ENCODE measurements at regions of chr7 and their contacts with region 1.

Region 1: GRCh38 chr7:134646425-134647305 is at the start of gene BPGM:
- DNase-seq: peak; percentile 96
- H3K4me3 Mint-ChIP-seq: no peak within 1 kb of the TSS
- H3K27ac Mint-ChIP-seq: no peak within 1 kb of the TSS
- H3K4me1 Mint-ChIP-seq: peaks cover 37% of the 10 kb centered on the region
- H3K27me3 Mint-ChIP-seq: no peaks in the 10 kb centered on the region
- total RNA-seq, gene BPGM: 23.8 and 25.3 TPM in 2 replicates

Region 2: DNA sequence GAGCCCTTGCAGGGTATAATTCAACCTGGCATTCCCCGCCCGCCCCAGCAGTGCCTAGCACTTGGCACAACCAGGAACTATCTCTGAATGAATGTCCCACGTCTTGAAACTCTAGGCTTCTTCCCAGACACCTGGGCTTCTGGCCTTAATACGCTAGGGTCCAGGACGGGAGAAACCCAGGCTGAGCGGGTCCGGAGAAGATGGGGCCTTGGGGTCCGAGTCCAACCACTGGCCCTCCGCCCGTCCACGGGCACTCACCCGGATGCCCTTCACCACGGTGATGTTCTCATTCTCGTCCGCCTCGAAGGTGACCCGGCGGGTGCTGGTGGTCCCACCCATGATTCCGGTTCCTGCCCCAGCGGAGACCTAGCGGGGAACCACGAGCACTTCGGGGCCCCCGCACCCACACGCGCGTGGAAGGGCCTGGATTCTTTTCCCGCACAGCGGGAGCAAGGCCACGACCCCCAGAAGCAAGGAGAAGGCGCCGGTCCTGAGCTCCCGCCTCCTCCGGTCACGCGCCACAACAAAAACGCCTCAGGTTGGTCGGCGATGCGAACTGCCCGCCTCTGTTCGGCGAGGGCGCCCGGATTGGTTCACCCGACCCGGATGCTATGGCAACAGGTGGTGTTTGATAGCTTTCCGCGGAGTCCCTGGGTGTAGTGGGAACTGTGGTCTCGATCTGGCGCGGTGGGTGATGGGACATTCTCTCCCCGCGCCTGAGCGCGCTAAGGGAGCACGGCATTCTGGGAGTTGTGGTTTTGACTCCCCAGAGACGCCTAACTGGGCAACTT is 1564.9 kb before region 1 on chr7 and contains the start of gene CHCHD3:
- intact Hi-C with region 1: loop called (anchors 5 kb)
- DNase-seq: peak; percentile 95
- H3K4me3 Mint-ChIP-seq: peak within 1 kb of the TSS; percentile 93
- H3K27ac Mint-ChIP-seq: peak within 1 kb of the TSS; percentile 94
- H3K4me1 Mint-ChIP-seq: peaks cover 33% of the 10 kb centered on the region
- H3K27me3 Mint-ChIP-seq: no peaks in the 10 kb centered on the region
- total RNA-seq, gene CHCHD3: 69.9 and 76.8 TPM in 2 replicates

Region 3: GRCh38 chr7:134316539-134317344 is 329.9 kb before region 1 on chr7 and contains the start of gene SLC35B4:
- intact Hi-C with region 1: loop called (anchors 1 kb)
- DNase-seq: peak; percentile 91
- H3K4me3 Mint-ChIP-seq: peak within 1 kb of the TSS; percentile 93
- H3K27ac Mint-ChIP-seq: peak within 1 kb of the TSS; percentile 89
- H3K4me1 Mint-ChIP-seq: peaks cover 17% of the 10 kb centered on the region
- H3K27me3 Mint-ChIP-seq: no peaks in the 10 kb centered on the region
- total RNA-seq, gene SLC35B4: 22.4 and 23.3 TPM in 2 replicates

Region 4: DNA sequence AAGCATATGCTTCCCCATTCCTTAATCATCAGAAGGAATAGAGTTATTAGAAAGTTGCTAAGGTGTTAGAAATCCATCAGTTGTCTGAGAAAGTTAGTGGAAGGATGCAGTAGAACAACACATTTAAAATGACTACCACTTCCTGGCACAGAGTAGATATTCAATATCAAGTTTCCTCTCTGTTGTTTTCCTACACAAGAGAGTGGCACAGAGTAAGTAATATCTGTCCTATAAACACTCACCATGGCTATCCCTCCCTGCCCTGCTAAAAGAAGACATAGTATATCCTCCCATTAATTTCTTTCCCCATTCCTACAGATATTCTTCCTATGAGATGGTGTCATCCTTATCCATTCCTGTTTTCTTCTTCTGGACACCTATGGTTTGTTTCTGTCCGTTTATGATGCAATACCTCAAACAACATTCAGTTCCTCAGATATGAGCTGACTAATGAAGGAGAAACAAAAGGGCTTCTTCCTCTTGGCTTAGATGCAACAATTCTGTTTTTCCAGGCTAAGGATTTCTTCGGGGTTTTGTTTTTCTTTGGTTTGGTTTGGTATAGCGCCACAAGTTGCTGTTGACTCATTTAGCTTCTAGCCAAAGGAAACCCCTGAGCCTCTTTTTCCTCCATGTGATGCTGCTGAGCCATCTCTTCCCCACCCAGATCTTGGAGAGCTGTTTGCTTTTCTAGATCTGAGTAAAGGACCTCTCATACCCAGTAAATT is 32.9 kb before region 1 on chr7:
- intact Hi-C with region 1: loop called (anchors 1 kb)
- DNase-seq: peak; percentile 5
- H3K4me3 Mint-ChIP-seq: peak overlapping the region; percentile 0
- H3K27ac Mint-ChIP-seq: peak overlapping the region; percentile 86
- H3K4me1 Mint-ChIP-seq: peaks cover 13% of the 10 kb centered on the region
- H3K27me3 Mint-ChIP-seq: peaks cover 15% of the 10 kb centered on the region

Region 5: GRCh38 chr7:134701272-134701671 is 54.6 kb after region 1 on chr7:
- intact Hi-C with region 1: no loop called
- DNase-seq: no peak
- H3K4me3 Mint-ChIP-seq: no peak overlapping the region
- H3K27ac Mint-ChIP-seq: no peak overlapping the region
- H3K4me1 Mint-ChIP-seq: no peaks in the 10 kb centered on the region
- H3K27me3 Mint-ChIP-seq: peaks cover 2% of the 10 kb centered on the region

Region 6: DNA sequence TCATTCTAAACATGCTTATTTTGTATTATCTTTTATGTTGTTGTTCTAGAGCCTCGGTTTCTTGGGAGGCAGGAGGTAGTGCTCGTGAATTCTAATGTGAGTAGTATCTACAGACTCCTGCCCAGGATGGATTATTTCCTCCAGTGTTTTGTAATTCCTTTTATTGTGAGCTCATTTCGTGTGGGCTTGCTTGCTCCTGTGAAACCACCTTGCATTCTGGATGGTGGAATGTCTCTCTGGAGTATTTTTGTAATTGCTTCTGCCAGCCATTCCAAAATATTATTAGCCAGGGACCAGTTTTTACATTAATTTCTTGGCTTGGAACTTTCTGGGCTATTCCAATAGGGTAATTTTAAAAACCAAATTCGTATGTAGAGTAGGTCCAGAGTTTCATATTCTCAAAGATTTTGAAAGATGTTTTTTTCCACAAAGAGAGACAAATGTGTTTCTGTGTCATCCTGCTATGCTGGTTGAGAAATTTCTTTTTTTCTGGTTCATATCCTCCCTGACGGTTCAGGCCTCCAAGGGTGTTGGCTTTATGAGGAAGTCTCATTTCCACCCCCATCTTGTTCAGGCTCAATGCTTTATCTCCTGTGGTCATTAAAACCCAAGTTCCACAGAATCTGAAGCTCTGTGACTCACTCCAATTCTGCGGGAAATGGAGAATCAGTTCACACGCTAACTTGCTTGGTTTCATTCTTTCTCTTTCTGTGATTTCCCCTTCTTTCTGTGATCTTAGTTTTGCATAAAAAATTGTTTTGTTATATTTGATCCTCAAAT is 91.1 kb after region 1 on chr7:
- intact Hi-C with region 1: loop called (anchors 1 kb)
- DNase-seq: peak; percentile 5
- H3K4me3 Mint-ChIP-seq: no peak overlapping the region
- H3K27ac Mint-ChIP-seq: peak overlapping the region; percentile 80
- H3K4me1 Mint-ChIP-seq: peaks cover 22% of the 10 kb centered on the region
- H3K27me3 Mint-ChIP-seq: peaks cover 4% of the 10 kb centered on the region

Region 7: GRCh38 chr7:135147899-135148721 is 501.4 kb after region 1 on chr7 and contains the start of gene TMEM140:
- intact Hi-C with region 1: loop called (anchors 1 kb)
- DNase-seq: peak; percentile 61
- H3K4me3 Mint-ChIP-seq: peak within 1 kb of the TSS; percentile 88
- H3K27ac Mint-ChIP-seq: peak within 1 kb of the TSS; percentile 96
- H3K4me1 Mint-ChIP-seq: peaks cover 60% of the 10 kb centered on the region
- H3K27me3 Mint-ChIP-seq: no peaks in the 10 kb centered on the region
- total RNA-seq, gene TMEM140: 2.9 and 4.5 TPM in 2 replicates

Region 8: GRCh38 chr7:135509903-135510602 is 863.4 kb after region 1 on chr7 and contains the start of gene CNOT4:
- intact Hi-C with region 1: loop called (anchors 1 kb)
- DNase-seq: peak; percentile 92
- H3K4me3 Mint-ChIP-seq: no peak within 1 kb of the TSS
- H3K27ac Mint-ChIP-seq: no peak within 1 kb of the TSS
- H3K4me1 Mint-ChIP-seq: no peaks in the 10 kb centered on the region
- H3K27me3 Mint-ChIP-seq: no peaks in the 10 kb centered on the region
- total RNA-seq, gene CNOT4: 21.3 and 23.3 TPM in 2 replicates

Measured in activated T-helper 1 cell treated with anti-CD3 and anti-CD28 coated beads, Interleukin-12 subunit alpha, Interleukin-12 subunit beta, Interleukin-2, Interleukin-4 antibody, amounts not matched to agents 30 ng/mL and 10 ng/mL and 1 ng/mL, durations not matched to agents 14 hours and 24 hours and 36 hours (primary cell).